ENCODE measurements at regions of chr18 and their contacts with region 1.

Region 1: DNA sequence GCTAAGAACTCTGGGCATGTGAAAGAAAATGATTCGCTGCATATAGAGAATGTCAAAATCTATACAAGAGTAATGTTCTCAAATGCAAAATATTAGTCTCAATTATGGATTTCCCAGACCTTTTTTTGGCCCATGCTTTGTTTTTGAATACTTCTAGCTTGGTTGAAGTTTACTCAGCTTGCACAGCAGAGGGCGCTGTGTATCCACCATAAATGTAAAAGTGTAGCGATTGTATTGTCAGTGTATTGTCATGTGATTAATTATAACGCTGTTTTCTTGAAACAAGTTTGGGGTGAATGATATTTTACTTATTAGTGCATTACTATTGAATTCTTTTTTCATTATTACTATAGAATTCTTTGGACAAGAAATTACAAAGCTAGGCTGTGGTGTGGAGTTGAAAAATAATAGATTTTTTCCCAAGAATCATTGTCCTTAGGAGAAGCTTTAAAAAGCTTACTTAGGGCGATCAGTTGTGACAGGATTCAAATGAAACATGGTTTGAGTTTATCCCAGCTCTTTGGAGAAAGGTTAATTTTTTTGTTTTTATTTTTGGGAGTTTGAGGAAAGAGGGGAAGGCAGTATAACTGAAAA is 98.3 kb downstream of the PIK3C3 start:
- DNase-seq: peak; percentile 37
- CTCF ChIP-seq: peak; percentile 71

Region 2: GRCh38 chr18:42028247-42028832 is 24.9 kb before region 1 on chr18:
- CTCF ChIA-PET with region 1: interaction called, 28 read pairs
- POLR2A ChIA-PET with region 1: no interaction called
- DNase-seq: peak; percentile 35
- CTCF ChIP-seq: peak; percentile 68

Region 3: GRCh38 chr18:42038936-42039335 is 14.3 kb before region 1 on chr18:
- CTCF ChIA-PET with region 1: interaction called, 16 read pairs
- POLR2A ChIA-PET with region 1: no interaction called
- DNase-seq: no peak
- CTCF ChIP-seq: no peak

Region 4: DNA sequence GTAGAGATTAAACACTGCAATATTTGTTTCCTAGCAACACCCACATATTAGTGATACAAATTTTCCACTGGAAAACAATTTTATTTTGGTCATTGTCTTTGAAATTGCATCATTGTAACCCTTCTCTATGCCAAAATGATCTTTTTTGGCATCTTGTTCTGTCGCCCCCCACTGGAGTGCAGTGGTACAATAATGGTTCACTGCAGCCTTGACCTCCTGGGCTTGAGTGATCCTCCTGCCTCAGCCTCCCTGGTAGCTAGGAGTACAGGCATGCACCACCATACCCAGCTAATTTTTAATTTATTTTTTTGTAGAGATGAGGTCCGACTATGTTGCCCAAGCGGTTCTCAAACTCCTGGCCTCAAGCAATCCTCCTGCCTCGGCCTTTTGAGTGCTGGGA is 19.1 kb after region 1 on chr18:
- CTCF ChIA-PET with region 1: interaction called, 115 read pairs
- POLR2A ChIA-PET with region 1: no interaction called
- DNase-seq: no peak
- CTCF ChIP-seq: no peak

Region 5: DNA sequence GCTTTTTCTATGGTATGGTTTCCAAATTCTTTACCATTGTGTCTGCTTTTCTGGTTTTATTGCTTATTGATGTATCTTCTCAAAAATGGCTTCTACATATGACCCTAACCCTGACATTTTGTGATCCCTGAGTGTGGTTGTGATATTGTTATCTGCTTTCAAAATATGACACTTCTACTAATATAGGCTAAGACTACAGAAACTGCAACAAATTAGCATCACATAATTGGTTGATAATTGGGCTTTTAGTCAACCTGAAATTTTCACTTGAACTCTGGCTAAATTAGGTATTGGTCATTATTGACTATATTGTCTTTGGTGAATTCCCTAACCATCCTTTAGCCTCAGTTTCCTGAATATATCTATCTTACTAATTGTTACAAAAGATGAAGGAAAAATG is 147.9 kb after region 1 on chr18:
- CTCF ChIA-PET with region 1: no interaction called
- POLR2A ChIA-PET with region 1: no interaction called
- DNase-seq: no peak
- CTCF ChIP-seq: no peak

Region 6: GRCh38 chr18:42274488-42275137 is 221.3 kb after region 1 on chr18:
- CTCF ChIA-PET with region 1: interaction called, 11 read pairs
- POLR2A ChIA-PET with region 1: no interaction called
- DNase-seq: peak; percentile 11
- CTCF ChIP-seq: peak; percentile 20

Region 7: DNA sequence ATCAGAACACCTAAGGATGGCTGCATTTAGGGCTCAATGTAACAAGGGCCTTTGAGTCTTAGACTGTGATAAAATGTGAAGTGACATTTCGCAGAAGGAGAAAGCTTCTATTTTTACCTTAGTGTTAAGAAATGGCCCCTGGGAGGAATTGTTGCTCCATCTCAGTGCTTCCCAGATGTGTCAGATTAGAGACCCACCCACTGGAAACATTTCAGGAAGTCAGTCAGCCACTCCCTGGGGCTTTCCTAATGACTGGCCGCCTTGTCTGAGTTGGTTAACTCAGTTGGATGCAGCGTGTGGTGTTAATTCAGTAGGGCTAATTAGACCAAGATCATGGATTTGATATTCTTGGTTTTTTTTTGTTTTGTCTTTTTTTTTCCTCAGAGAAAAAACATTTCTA is 257.7 kb after region 1 on chr18:
- CTCF ChIA-PET with region 1: no interaction called
- POLR2A ChIA-PET with region 1: no interaction called
- DNase-seq: no peak
- CTCF ChIP-seq: no peak

Region 8: GRCh38 chr18:43271593-43272432 is 1218.5 kb after region 1 on chr18:
- CTCF ChIA-PET with region 1: interaction called, 17 read pairs
- POLR2A ChIA-PET with region 1: no interaction called
- DNase-seq: peak; percentile 17
- CTCF ChIP-seq: peak; percentile 81